ENCODE measurements at regions of chr7 and their contacts with region 1.

Region 1: GRCh38 chr7:16055263-16055976 is 365.9 kb downstream of the CRPPA start:
- DNase-seq: no peak

Region 2: DNA sequence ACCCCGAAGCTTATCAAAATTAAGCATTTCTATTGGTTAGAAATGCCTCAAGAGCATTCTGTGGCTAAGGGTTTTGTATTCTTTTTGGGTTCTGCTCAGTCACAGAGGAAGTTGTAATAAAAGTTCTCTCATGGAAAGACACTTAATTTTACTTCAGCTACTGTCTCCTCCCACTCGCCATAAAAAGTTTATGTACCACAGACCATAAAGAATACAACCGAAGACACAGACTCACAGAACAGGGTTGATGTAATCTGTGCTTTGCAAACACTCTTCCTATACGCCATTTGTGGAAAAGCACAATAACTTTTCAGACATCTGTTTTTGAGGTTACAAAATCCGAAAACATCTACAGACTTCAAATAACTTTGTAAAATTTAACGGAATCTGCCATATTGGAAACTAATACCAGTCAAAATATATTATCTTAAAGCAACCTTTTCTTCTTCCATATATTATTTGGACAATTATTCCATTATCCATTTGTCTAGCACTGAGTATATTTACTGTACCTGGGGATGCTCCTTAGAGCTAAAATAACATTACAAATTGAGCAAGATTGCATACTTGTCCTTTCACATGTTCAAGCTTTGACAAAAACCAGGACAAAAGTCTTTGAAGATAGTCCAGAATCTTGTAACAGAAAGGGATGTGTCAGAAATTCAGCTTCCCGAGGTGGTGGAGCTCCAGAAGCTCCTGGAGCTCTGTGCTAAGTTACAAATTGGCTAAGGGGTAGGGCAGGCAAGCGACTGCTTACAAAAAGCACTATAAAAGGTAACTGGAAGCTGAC is 150.0 kb before region 1 on chr7:
- intact Hi-C with region 1: loop called in 1 of 2 experiments (anchors 10 kb)
- DNase-seq: no peak

Measured in posterior vena cava (tissue), 2 donors.